HepG2 (cell line): ENCODE measurements at regions of chr2 and their contacts with region 1.

Region 1: GRCh38 chr2:100730346-100730745 is 89.6 kb upstream of the NPAS2 start:
- DNase-seq: peak; percentile 82
- ATAC-seq: peak; percentile 94
- H3K4me3 ChIP-seq: no peak overlapping the region
- H3K27ac ChIP-seq: no peak overlapping the region
- H3K4me1 ChIP-seq: peaks cover 34% of the 10 kb centered on the region
- H3K27me3 ChIP-seq: peaks cover 0 to 2% of the 10 kb centered on the region in 2 experiments; a peak in 1 of 5 replicates
- CTCF ChIP-seq: peak; percentile 88
- EP300 ChIP-seq: no peak
- POLR2A ChIP-seq: no peak
- RAD21 ChIP-seq: peak; percentile 94

Region 2: GRCh38 chr2:100818606-100819369 is 88.4 kb after region 1 on chr2:
- CTCF ChIA-PET with region 1: interaction called, 12 read pairs
- POLR2A ChIA-PET with region 1: interaction called, 6 read pairs
- in situ Hi-C with region 1: loop called (anchors 5 kb)
- intact Hi-C with region 1: loop called (anchors 1 kb)
- DNase-seq: peak; percentile 78
- ATAC-seq: peak; percentile 71
- H3K4me3 ChIP-seq: peak overlapping the region; percentile 76 to 96 (median 87)
- H3K27ac ChIP-seq: peak overlapping the region; percentile 65
- H3K4me1 ChIP-seq: peaks cover 71% of the 10 kb centered on the region
- H3K27me3 ChIP-seq: no peaks in the 10 kb centered on the region; a peak in 1 of 5 replicates
- CTCF ChIP-seq: peak; percentile 81
- EP300 ChIP-seq: no peak; a peak in 1 of 4 replicates
- POLR2A ChIP-seq: peak; percentile 69 to 70
- RAD21 ChIP-seq: peak; percentile 85

Region 3: GRCh38 chr2:100823665-100824438 is 93.5 kb after region 1 on chr2:
- CTCF ChIA-PET with region 1: interaction called, 12 read pairs
- POLR2A ChIA-PET with region 1: interaction called, 6 read pairs
- in situ Hi-C with region 1: loop called (anchors 5 kb)
- intact Hi-C with region 1: loop called (anchors 1 kb)
- DNase-seq: peak; percentile 46
- ATAC-seq: no peak
- H3K4me3 ChIP-seq: no peak overlapping the region
- H3K27ac ChIP-seq: peak overlapping the region; percentile 71
- H3K4me1 ChIP-seq: peaks cover 73% of the 10 kb centered on the region
- H3K27me3 ChIP-seq: no peaks in the 10 kb centered on the region; a peak in 1 of 5 replicates
- CTCF ChIP-seq: no peak
- EP300 ChIP-seq: peak in 1 of 2 experiments; percentile 33; a peak in 1 of 4 replicates
- POLR2A ChIP-seq: no peak
- RAD21 ChIP-seq: no peak

Region 4: GRCh38 chr2:100852999-100853908 is 122.9 kb after region 1 on chr2:
- CTCF ChIA-PET with region 1: no interaction called
- POLR2A ChIA-PET with region 1: no interaction called
- in situ Hi-C with region 1: no loop called
- intact Hi-C with region 1: loop called (anchors 1 kb)
- DNase-seq: peak; percentile 52
- ATAC-seq: peak; percentile 55
- H3K4me3 ChIP-seq: no peak overlapping the region
- H3K27ac ChIP-seq: peak overlapping the region; percentile 39
- H3K4me1 ChIP-seq: peaks cover 35% of the 10 kb centered on the region
- H3K27me3 ChIP-seq: no peaks in the 10 kb centered on the region
- CTCF ChIP-seq: peak; percentile 48
- EP300 ChIP-seq: no peak
- POLR2A ChIP-seq: no peak
- RAD21 ChIP-seq: no peak

Region 5: GRCh38 chr2:100882645-100883613 is 152.6 kb after region 1 on chr2:
- CTCF ChIA-PET with region 1: no interaction called
- POLR2A ChIA-PET with region 1: no interaction called
- in situ Hi-C with region 1: no loop called
- intact Hi-C with region 1: loop called (anchors 1 kb)
- DNase-seq: peak; percentile 96
- ATAC-seq: peak; percentile 89
- H3K4me3 ChIP-seq: no peak overlapping the region
- H3K27ac ChIP-seq: peak overlapping the region; percentile 83
- H3K4me1 ChIP-seq: peaks cover 73% of the 10 kb centered on the region
- H3K27me3 ChIP-seq: no peaks in the 10 kb centered on the region
- CTCF ChIP-seq: no peak
- EP300 ChIP-seq: peak; percentile 82 to 90
- POLR2A ChIP-seq: peak in 1 of 2 experiments; percentile 33; a peak in 1 of 4 replicates
- RAD21 ChIP-seq: no peak